ENCODE measurements at regions of chr4 and their contacts with region 1.

Region 1: DNA sequence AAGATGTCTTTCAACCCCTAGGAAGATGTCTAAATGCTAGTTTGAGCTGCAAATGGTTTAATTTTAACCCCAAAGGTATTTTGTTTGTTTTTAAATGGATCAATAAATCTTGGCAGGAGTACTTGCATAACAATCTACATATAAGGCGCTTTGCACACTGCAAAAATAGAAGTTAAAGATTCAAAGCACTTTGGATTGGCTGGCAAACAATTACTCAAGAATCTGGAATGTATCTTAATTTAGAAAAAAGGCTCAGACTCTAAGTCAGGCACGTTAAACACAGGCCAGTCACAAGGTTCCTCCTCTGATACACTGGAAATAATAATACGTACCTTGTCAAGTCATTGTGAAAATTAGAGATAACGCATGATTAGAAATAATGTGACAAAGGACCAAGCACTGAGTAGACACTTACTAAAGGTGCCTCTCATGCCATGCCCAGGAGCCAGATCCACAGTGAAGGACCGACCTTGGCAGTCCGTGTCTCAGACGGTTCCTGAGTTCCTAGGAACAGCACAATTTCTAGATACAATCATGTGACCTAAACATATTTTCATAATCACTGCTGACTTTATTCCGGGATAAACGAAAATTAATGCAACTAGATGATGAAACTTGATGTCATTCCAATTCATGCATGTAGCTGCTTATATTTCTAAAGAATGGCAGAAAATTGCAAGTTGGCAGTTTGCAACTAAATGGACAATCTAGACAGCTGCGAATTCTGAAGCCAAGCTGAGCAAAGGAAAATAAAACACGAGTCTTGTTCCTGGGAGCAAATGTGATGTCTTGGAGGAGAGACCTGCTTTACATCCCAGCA is 49.6 kb downstream of the PROM1 start:
- DNase-seq: peak; percentile 35
- H3K4me3 ChIP-seq: no peak overlapping the region
- H3K27ac ChIP-seq: peak overlapping the region; percentile 78
- H3K4me1 ChIP-seq: peaks cover 76% of the 10 kb centered on the region
- H3K27me3 ChIP-seq: no peaks in the 10 kb centered on the region
- CTCF ChIP-seq: no peak

Region 2: GRCh38 chr4:16082426-16083240 is 48.4 kb after region 1 on chr4:
- CTCF ChIA-PET with region 1: no interaction called
- POLR2A ChIA-PET with region 1: no interaction called
- intact Hi-C with region 1: loop called (anchors 2 kb)
- DNase-seq: peak; percentile 81
- H3K4me3 ChIP-seq: peak overlapping the region; percentile 52
- H3K27ac ChIP-seq: peak overlapping the region; percentile 10
- H3K4me1 ChIP-seq: no peaks in the 10 kb centered on the region
- H3K27me3 ChIP-seq: peaks cover 42% of the 10 kb centered on the region
- CTCF ChIP-seq: 0 out of 2 replicates have a peak, but pooled peaks have one; percentile 9

Region 3: GRCh38 chr4:16157609-16158503 is 123.6 kb after region 1 on chr4:
- CTCF ChIA-PET with region 1: interaction called, 11 read pairs
- POLR2A ChIA-PET with region 1: no interaction called
- intact Hi-C with region 1: loop called (anchors 1 kb)
- DNase-seq: peak; percentile 99
- H3K4me3 ChIP-seq: no peak overlapping the region
- H3K27ac ChIP-seq: peak overlapping the region; percentile 35
- H3K4me1 ChIP-seq: peaks cover 69% of the 10 kb centered on the region
- H3K27me3 ChIP-seq: no peaks in the 10 kb centered on the region
- CTCF ChIP-seq: no peak

Measured in A673 (cell line).